Posterior vena cava (tissue), 2 donors: ENCODE measurements at regions of chr16 and their contacts with region 1.

Region 1: GRCh38 chr16:22077700-22078313 is 14.5 kb upstream of the VWA3A start:
- DNase-seq: peak; percentile 83

Region 2: DNA sequence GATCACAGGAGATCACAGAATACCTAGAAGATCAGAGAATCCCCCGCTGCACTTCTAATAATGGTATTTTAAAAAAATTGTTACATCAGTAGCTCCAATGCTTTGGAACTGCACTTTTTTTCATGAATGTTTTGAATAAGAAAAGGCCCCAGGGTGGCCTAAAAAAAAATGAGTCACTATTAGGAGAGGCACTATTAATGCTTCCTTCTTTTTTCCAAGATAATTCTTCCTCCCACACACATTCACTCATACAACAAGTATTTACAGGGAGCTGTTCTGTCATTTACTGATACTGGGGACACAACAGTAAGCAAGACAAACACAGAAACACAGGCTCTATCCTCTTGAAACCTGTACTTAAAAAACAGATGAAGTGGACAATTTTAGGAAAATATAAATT is 76.2 kb before region 1 on chr16:
- intact Hi-C with region 1: loop called (anchors 5 to 10 kb)
- DNase-seq: no peak

Region 3: DNA sequence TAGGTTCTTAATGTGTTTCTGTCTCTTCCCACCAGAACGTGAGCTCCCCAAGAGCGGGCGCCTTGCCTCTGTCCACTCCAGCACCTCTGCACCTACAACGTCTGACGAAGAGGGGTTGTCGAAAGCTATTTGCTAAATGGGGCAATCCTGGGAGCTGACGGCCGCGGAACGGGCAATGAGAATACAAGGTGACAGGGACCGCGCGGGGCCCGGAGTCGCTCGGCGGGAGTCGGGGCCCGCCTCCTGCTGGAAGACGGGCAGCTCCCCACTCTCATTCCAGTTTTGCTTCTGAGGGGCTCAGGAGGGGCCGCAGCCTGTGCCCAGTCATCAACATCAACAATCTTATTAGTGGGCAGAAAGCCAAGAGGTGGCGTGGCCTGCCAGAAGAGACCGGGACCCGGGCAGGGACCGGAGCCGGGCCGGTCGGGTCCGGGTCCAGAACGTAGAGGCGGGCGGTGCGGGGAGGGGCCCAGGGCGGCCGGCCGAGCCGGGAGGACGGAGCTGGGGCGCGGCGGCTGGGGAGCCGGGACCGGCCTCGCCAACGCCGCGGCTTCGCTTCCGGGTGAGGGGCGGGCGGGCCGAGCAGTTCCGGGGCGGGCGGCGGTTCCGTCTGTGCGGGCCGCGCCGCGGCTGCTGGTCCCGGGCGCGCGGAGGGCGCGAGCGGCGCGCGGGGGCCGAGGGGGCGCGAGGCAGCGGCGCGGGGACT is 70.1 kb before region 1 on chr16 and contains the start of gene MOSMO:
- intact Hi-C with region 1: loop called (anchors 5 to 10 kb)
- DNase-seq: peak; percentile 92
- total RNA-seq, gene MOSMO: 13.3 to 16.1 TPM